Psoas muscle (tissue), 8 donors: ENCODE measurements at regions of chr20 and their contacts with region 1.

Region 1: GRCh38 chr20:49330544-49331239 is 52.8 kb upstream of the ZNFX1 start:
- DNase-seq: no peak
- ATAC-seq: no peak
- H3K4me3 ChIP-seq: no peak overlapping the region
- H3K27ac ChIP-seq: no peak overlapping the region
- H3K4me1 ChIP-seq: no peaks in the 10 kb centered on the region
- H3K27me3 ChIP-seq: peaks cover 0 to 10% (median 0%) of the 10 kb centered on the region in 3 donors
- CTCF ChIP-seq: no peak

Region 2: GRCh38 chr20:49424536-49424935 is 93.8 kb after region 1 on chr20:
- intact Hi-C with region 1: no loop called
- DNase-seq: peak; percentile 29 to 59
- ATAC-seq: peak in 3 of 4 donors; percentile 22 to 50 (median 31)
- H3K4me3 ChIP-seq: no peak overlapping the region
- H3K27ac ChIP-seq: peak overlapping the region; percentile 9
- H3K4me1 ChIP-seq: peaks cover 41% of the 10 kb centered on the region
- H3K27me3 ChIP-seq: no peaks in the 10 kb centered on the region
- CTCF ChIP-seq: no peak

Region 3: GRCh38 chr20:49534255-49534712 is 203.6 kb after region 1 on chr20:
- intact Hi-C with region 1: loop called (anchors 1 to 2 kb)
- DNase-seq: no peak
- ATAC-seq: peak; percentile 69 to 83 (median 76)
- H3K4me3 ChIP-seq: no peak overlapping the region
- H3K27ac ChIP-seq: no peak overlapping the region
- H3K4me1 ChIP-seq: no peaks in the 10 kb centered on the region
- H3K27me3 ChIP-seq: no peaks in the 10 kb centered on the region
- CTCF ChIP-seq: peak; percentile 77